Activated CD8-positive, alpha-beta T cell treated with anti-CD3 and anti-CD28 coated beads, Interleukin-2, amount 10 ng/mL, durations not matched to agents 7 days and 5 days (primary cell): ENCODE measurements at regions of chr19 and their contacts with region 1.

Region 1: GRCh38 chr19:15555759-15556633 is 47.7 kb downstream of the CYP4F22 start:
- DNase-seq: peak; percentile 98
- ATAC-seq: peak; percentile 86
- H3K4me3 Mint-ChIP-seq: peak overlapping the region; percentile 86
- H3K27ac Mint-ChIP-seq: peak overlapping the region; percentile 82
- H3K4me1 Mint-ChIP-seq: peaks cover 29% of the 10 kb centered on the region
- H3K27me3 Mint-ChIP-seq: peaks cover 9% of the 10 kb centered on the region

Region 2: DNA sequence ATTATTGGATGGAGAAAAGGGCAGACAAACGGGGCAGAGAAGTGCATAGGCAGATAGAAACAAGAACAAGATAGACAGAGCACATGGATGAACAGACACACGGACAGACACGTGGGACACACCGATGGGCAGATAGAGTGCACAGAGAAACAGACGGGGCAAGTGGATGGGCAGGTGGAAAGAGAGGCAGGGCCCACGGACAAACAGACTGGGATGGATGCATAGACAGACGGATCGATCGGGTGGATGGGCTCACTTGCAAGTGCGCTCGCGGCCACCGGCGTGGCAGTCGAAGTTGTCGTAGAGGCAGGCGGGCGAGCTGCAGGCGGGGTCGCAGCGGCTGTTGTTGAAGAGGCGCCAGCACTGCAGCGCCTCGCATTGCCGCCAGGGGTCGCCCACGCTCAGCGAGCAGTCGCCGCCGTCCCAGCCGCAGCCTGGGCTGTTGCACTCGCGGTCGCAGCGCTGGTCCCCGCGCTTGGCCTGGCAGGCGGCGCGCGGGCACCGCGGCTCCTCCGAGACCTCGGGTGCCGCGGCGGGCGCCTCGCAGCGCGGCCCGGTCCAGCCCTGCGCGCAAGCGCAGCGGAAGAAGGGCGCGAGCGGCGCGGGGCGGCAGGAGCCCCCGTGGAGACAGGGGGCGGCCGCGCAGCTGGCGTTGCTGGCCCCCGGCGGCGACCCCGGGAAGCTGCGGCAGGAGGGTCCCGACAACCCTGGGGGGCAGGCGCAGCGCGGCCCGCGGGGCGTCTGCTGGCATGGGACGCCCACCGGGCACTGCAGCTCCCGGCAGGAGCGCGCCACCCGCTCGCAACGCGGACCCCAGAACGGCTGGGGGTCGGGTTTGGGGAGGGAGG is 378.5 kb before region 1 on chr19:
- CTCF ChIA-PET with region 1: interaction called, 12 read pairs
- POLR2A ChIA-PET with region 1: no interaction called
- DNase-seq: peak; percentile 88
- ATAC-seq: peak; percentile 95
- H3K4me3 Mint-ChIP-seq: no peak overlapping the region
- H3K27ac Mint-ChIP-seq: no peak overlapping the region
- H3K4me1 Mint-ChIP-seq: peaks cover 3% of the 10 kb centered on the region
- H3K27me3 Mint-ChIP-seq: peaks cover 9% of the 10 kb centered on the region

Region 3: GRCh38 chr19:15379083-15379995 is 176.7 kb before region 1 on chr19 and contains the start of gene AKAP8:
- CTCF ChIA-PET with region 1: interaction called, 27 read pairs
- POLR2A ChIA-PET with region 1: interaction called, 5 read pairs
- DNase-seq: peak; percentile 98
- ATAC-seq: peak; percentile 88
- H3K4me3 Mint-ChIP-seq: peak within 1 kb of the TSS; percentile 96
- H3K27ac Mint-ChIP-seq: peak within 1 kb of the TSS; percentile 99
- H3K4me1 Mint-ChIP-seq: peaks cover 36% of the 10 kb centered on the region
- H3K27me3 Mint-ChIP-seq: no peaks in the 10 kb centered on the region
- total RNA-seq, gene AKAP8: 47.4 to 48.0 TPM

Region 4: GRCh38 chr19:15432629-15433518 is 123.1 kb before region 1 on chr19:
- CTCF ChIA-PET with region 1: interaction called, 19 read pairs
- POLR2A ChIA-PET with region 1: interaction called, 5 read pairs
- DNase-seq: peak; percentile 95
- ATAC-seq: peak; percentile 89
- H3K4me3 Mint-ChIP-seq: peak overlapping the region; percentile 98
- H3K27ac Mint-ChIP-seq: peak overlapping the region; percentile 98
- H3K4me1 Mint-ChIP-seq: peaks cover 34% of the 10 kb centered on the region
- H3K27me3 Mint-ChIP-seq: no peaks in the 10 kb centered on the region

Region 5: DNA sequence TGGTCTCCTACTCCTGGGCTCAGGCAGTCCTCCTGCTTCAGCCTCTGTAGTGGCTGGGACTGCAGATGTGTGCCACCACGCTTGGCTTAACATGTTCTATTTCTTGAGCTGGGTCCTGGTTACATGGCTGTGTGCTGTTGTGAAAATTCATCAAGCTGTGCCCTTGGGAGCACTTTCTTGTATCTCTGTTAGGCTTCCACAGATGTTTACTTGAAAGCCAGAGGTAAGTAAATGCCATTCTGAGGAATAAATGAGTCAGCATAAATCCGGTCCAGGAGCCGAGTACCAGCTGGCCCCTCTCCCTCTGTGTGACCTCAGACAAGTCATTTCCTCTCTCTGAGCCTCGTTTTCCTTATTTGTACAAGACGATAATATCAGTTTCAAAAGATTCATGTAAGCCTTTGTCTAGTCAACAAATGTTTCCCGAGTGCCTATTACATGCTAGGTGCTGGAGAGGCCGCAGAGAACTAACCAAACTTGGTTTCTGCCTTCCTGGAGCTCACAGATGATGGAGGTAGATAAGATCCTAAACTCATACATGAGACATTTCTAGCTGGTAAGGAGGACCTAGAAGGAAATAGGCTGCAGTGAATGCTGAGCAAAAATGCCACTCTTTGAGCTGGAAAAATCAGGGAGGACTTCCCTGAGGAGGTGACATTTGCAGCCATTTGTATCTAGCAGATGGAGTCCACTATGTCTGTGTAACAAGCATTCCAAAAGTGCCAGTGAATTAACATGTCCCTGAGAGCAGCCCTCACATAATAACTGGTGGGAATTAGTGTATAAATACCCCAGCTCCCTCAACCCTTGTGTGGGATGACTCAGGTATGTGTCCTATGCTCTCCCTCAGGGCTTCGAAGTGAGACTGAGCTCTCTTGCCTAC is 88.9 kb before region 1 on chr19:
- CTCF ChIA-PET with region 1: interaction called, 31 read pairs
- POLR2A ChIA-PET with region 1: interaction called, 12 read pairs
- DNase-seq: peak; percentile 79
- ATAC-seq: peak; percentile 45
- H3K4me3 Mint-ChIP-seq: peak overlapping the region; percentile 48
- H3K27ac Mint-ChIP-seq: peak overlapping the region; percentile 85
- H3K4me1 Mint-ChIP-seq: peaks cover 62% of the 10 kb centered on the region
- H3K27me3 Mint-ChIP-seq: peaks cover 10% of the 10 kb centered on the region

Region 6: DNA sequence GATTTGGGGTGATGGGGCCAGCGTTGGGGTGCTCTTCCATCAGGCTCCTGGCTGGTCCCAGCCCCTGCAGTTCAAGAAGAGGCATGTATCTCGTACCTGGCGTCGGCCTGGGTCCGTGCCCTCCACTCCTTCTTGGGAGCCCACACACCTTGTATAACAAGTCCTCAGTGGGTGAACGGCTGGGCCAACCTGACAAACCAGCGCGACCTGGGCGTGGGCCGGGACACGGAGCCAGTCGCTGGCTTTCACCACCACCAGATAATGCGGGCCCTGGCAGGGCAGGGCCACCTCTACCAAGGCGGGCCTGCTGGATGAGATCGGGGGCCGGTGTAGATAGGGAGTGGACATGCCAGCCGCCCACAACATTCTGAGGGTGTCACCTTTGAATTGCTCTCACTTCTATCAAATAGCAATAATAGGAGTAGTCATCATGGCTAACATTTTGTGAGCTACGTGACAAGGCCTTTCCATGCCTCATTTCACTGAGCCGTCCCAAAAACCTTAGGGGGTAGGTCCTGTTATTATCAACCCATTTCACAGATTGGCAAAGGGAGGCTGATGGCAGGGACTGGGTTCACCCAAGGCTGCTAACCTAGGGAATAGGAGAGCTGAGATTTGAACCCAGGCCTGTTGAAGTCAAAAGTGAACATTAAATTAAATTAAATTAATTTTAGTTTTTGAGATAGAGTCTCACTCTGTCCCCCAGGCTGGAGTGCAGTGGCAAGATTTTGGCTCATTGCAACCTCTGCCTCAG is 44.1 kb before region 1 on chr19:
- CTCF ChIA-PET with region 1: interaction called, 13 read pairs
- POLR2A ChIA-PET with region 1: interaction called, 6 read pairs
- DNase-seq: no peak
- ATAC-seq: no peak
- H3K4me3 Mint-ChIP-seq: no peak overlapping the region
- H3K27ac Mint-ChIP-seq: no peak overlapping the region
- H3K4me1 Mint-ChIP-seq: peaks cover 52% of the 10 kb centered on the region
- H3K27me3 Mint-ChIP-seq: peaks cover 20% of the 10 kb centered on the region

Region 7: DNA sequence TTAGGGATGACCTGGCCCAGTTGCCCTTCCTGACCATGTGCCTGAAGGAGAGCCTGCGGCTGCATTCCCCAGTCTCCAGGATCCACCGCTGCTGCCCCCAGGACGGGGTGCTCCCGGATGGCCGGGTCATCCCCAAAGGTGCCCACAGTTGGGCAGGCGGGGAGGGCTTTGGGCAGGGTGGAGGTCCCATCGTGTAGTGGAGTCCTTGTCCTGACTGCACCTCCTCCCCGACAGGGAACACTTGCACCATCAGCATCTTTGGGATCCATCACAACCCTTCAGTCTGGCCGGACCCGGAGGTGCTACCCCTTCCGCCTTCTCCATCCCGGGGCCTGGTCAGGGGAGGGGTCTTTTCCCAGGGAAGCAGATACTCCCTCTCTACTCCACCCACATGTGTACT is 27.4 kb after region 1 on chr19:
- CTCF ChIA-PET with region 1: no interaction called
- POLR2A ChIA-PET with region 1: no interaction called
- DNase-seq: no peak
- ATAC-seq: no peak
- H3K4me3 Mint-ChIP-seq: no peak overlapping the region
- H3K27ac Mint-ChIP-seq: no peak overlapping the region
- H3K4me1 Mint-ChIP-seq: peaks cover 6% of the 10 kb centered on the region
- H3K27me3 Mint-ChIP-seq: peaks cover 17% of the 10 kb centered on the region

Region 8: GRCh38 chr19:15595069-15595468 is 39.1 kb after region 1 on chr19:
- CTCF ChIA-PET with region 1: no interaction called
- POLR2A ChIA-PET with region 1: no interaction called
- DNase-seq: no peak
- ATAC-seq: no peak
- H3K4me3 Mint-ChIP-seq: no peak overlapping the region
- H3K27ac Mint-ChIP-seq: no peak overlapping the region
- H3K4me1 Mint-ChIP-seq: no peaks in the 10 kb centered on the region
- H3K27me3 Mint-ChIP-seq: peaks cover 10% of the 10 kb centered on the region

Region 9: GRCh38 chr19:15717809-15718208 is 161.8 kb after region 1 on chr19:
- CTCF ChIA-PET with region 1: no interaction called
- POLR2A ChIA-PET with region 1: no interaction called
- DNase-seq: no peak
- ATAC-seq: no peak
- H3K4me3 Mint-ChIP-seq: no peak overlapping the region
- H3K27ac Mint-ChIP-seq: no peak overlapping the region
- H3K4me1 Mint-ChIP-seq: no peaks in the 10 kb centered on the region
- H3K27me3 Mint-ChIP-seq: peaks cover 9% of the 10 kb centered on the region